Caco-2 (cell line): ENCODE measurements at regions of chr10 and their contacts with region 1.

Region 1: DNA sequence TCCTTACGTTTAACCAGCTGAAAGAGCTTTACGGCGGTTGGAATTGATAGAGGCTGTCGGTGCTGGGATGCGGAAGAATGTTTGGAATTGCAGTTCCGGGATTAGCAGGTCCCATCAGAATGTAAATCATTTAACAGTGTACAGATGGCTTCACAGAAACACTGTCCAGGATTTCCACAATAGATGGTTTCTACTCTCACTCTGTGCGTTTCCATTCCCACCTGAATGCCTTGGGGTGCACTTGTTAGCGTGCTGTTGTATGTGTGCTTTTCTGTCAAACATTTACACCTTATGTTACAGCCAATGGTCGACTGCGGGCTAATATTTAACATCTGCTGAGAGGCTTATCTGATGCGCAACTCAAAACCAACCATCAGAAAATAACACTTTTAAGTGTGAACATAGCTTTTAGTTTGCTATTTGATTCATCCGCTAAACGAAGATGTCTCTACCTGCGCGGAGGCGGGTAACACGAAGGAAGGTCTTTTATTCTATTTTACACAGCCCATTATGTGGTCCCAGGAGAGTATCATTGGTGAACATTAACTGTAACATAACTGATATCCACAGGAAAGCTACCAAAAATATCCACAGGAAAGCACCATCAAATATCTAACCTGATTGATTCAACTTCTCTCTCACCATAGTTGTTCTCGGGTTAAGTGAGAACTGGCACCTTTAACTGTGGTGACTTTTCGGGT is 179.0 kb downstream of the PRPF18 start:
- DNase-seq: peak; percentile 91 to 95
- H3K4me3 ChIP-seq: peak overlapping the region; percentile 4; the same call in 1 of the 2 replicates
- H3K4me3 Mint-ChIP-seq: peak overlapping the region; percentile 63
- H3K27ac Mint-ChIP-seq: peak overlapping the region; percentile 78
- H3K4me1 ChIP-seq: peaks cover 55% of the 10 kb centered on the region
- H3K4me1 Mint-ChIP-seq: peaks cover 64% of the 10 kb centered on the region
- H3K27me3 ChIP-seq: no peaks in the 10 kb centered on the region
- H3K27me3 Mint-ChIP-seq: no peaks in the 10 kb centered on the region
- CTCF ChIP-seq: no peak

Region 2: DNA sequence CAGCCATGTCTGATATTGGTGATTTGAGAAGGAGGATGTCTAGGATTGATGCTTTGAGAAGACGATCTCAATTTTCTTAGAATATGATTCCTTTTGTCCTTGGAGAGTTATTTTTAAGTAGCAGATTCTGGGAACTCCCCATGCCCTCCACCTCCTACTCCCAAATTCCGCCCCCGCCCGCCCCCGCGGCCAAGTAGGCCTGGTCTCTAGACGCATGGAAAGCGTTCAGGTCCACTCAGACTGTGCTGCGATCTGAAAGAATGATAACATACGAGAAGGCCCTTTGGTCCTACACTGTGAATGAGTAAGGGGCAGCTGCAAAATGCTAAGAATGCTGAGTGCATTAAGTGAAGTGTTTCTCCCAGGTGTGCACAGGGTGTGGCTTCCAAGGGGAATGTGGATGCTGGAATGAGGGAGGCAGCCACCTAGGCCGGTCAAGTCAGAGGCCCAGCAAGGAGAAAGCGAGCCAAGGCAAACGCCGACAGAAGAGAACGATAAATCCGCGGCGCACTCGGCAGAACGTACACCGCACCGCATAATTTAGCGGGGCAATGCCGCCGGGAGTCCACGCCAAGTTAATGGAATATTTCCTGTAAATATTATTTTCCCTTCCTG is 36.8 kb before region 1 on chr10:
- CTCF ChIA-PET with region 1: no interaction called
- POLR2A ChIA-PET with region 1: no interaction called
- intact Hi-C with region 1: loop called (anchors 1 kb)
- DNase-seq: peak; percentile 87 to 94
- H3K4me3 ChIP-seq: no peak overlapping the region
- H3K4me3 Mint-ChIP-seq: peak overlapping the region; percentile 61
- H3K27ac Mint-ChIP-seq: peak overlapping the region; percentile 97
- H3K4me1 ChIP-seq: peaks cover 43% of the 10 kb centered on the region
- H3K4me1 Mint-ChIP-seq: peaks cover 57% of the 10 kb centered on the region
- H3K27me3 ChIP-seq: no peaks in the 10 kb centered on the region
- H3K27me3 Mint-ChIP-seq: no peaks in the 10 kb centered on the region
- CTCF ChIP-seq: no peak

Region 3: GRCh38 chr10:13751191-13751764 is 14.5 kb before region 1 on chr10:
- CTCF ChIA-PET with region 1: no interaction called
- POLR2A ChIA-PET with region 1: no interaction called
- intact Hi-C with region 1: no loop called
- DNase-seq: no peak
- H3K4me3 ChIP-seq: no peak overlapping the region
- H3K4me3 Mint-ChIP-seq: no peak overlapping the region
- H3K27ac Mint-ChIP-seq: no peak overlapping the region
- H3K4me1 ChIP-seq: peaks cover 18% of the 10 kb centered on the region
- H3K4me1 Mint-ChIP-seq: peaks cover 6% of the 10 kb centered on the region
- H3K27me3 ChIP-seq: no peaks in the 10 kb centered on the region
- H3K27me3 Mint-ChIP-seq: no peaks in the 10 kb centered on the region
- CTCF ChIP-seq: no peak

Region 4: DNA sequence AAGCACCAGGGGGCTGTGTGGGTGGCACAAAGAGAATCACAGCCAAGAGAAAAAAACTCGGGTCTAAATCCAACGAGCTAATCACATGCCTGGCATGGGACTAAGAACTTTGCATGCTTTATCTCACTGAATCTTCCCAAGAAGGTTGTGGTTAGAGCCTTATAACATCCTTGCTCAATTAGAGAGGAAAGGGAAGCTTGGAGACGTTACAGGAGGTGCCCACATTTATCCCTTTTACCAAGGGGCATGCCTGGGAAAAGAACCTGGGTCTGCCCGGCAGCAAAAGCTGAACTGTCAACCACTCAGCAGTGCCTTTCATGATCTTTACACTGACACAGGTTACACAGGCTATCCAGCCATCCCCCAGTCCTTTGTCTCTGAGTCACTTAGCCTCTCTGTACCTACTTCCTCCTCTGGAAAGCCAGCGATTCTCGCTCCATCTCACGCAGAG is 11.1 kb after region 1 on chr10:
- CTCF ChIA-PET with region 1: no interaction called
- POLR2A ChIA-PET with region 1: no interaction called
- intact Hi-C with region 1: loop called (anchors 1 kb)
- DNase-seq: no peak
- H3K4me3 ChIP-seq: no peak overlapping the region
- H3K4me3 Mint-ChIP-seq: no peak overlapping the region
- H3K27ac Mint-ChIP-seq: no peak overlapping the region
- H3K4me1 ChIP-seq: peaks cover 19% of the 10 kb centered on the region
- H3K4me1 Mint-ChIP-seq: peaks cover 13% of the 10 kb centered on the region
- H3K27me3 ChIP-seq: no peaks in the 10 kb centered on the region
- H3K27me3 Mint-ChIP-seq: no peaks in the 10 kb centered on the region
- CTCF ChIP-seq: no peak